Left ventricle myocardium inferior (tissue), 1 donor: ENCODE measurements at regions of chr1 and their contacts with region 1.

Region 1: GRCh38 chr1:182962554-182963115 is 9.7 kb upstream of the SHCBP1L start:
- DNase-seq: peak; percentile 81
- H3K4me3 ChIP-seq: peak overlapping the region; percentile 45
- H3K27ac ChIP-seq: peak overlapping the region; percentile 70
- H3K4me1 ChIP-seq: peaks cover 6% of the 10 kb centered on the region
- H3K27me3 ChIP-seq: no peaks in the 10 kb centered on the region
- CTCF ChIP-seq: peak; percentile 98

Region 2: GRCh38 chr1:182649041-182649440 is 313.6 kb before region 1 on chr1:
- intact Hi-C with region 1: no loop called
- DNase-seq: no peak
- H3K4me3 ChIP-seq: no peak overlapping the region
- H3K27ac ChIP-seq: no peak overlapping the region
- H3K4me1 ChIP-seq: no peaks in the 10 kb centered on the region
- H3K27me3 ChIP-seq: no peaks in the 10 kb centered on the region
- CTCF ChIP-seq: no peak

Region 3: DNA sequence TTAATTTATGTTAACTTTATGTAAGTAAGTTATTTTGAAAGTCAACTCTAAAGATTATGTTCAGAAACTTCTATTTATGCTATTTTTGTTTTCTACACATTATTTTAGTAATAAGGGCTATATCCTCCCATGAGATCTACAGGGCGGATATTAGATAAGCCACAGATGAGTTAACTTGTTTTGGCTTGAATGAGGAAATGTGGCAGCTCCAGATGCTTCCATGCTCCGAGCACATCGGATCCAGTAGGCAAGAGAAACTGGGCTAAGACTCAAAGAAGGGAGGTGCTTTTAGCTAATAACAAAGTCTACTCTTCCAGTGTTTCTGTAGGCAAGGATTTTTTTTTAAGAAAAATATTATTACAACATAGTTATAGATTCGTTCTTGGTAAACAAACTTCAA is 40.6 kb after region 1 on chr1:
- intact Hi-C with region 1: no loop called
- DNase-seq: no peak
- H3K4me3 ChIP-seq: peak overlapping the region; percentile 1
- H3K27ac ChIP-seq: peak overlapping the region; percentile 74
- H3K4me1 ChIP-seq: peaks cover 17% of the 10 kb centered on the region
- H3K27me3 ChIP-seq: no peaks in the 10 kb centered on the region
- CTCF ChIP-seq: no peak

Region 4: GRCh38 chr1:183023601-183024316 is 61.1 kb after region 1 on chr1:
- intact Hi-C with region 1: loop called (anchors 5 kb)
- DNase-seq: peak; percentile 65
- H3K4me3 ChIP-seq: peak overlapping the region; percentile 73
- H3K27ac ChIP-seq: peak overlapping the region; percentile 98
- H3K4me1 ChIP-seq: peaks cover 79% of the 10 kb centered on the region
- H3K27me3 ChIP-seq: no peaks in the 10 kb centered on the region
- CTCF ChIP-seq: peak; percentile 65

Region 5: DNA sequence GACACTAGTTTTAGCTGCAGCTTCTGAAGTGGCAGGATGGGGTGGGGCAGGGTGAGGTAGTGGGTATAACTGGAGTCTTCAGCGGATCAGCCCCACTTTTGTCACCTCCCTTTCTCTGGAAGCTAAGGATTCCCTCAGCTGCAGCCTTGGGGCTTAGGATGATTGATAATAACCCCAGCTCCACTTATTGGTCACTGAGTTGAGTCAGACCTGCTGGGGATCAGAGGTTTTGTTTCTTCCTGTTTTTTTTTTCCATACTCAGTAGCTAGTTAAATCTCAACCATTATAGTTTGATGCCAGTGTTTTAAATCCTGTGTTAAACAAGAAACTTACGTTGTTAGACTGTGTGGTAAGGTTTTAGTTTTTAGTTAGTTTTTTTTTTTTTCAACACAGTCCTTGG is 117.8 kb after region 1 on chr1:
- intact Hi-C with region 1: no loop called
- DNase-seq: no peak
- H3K4me3 ChIP-seq: no peak overlapping the region
- H3K27ac ChIP-seq: no peak overlapping the region
- H3K4me1 ChIP-seq: peaks cover 86% of the 10 kb centered on the region
- H3K27me3 ChIP-seq: no peaks in the 10 kb centered on the region
- CTCF ChIP-seq: no peak

Region 6: DNA sequence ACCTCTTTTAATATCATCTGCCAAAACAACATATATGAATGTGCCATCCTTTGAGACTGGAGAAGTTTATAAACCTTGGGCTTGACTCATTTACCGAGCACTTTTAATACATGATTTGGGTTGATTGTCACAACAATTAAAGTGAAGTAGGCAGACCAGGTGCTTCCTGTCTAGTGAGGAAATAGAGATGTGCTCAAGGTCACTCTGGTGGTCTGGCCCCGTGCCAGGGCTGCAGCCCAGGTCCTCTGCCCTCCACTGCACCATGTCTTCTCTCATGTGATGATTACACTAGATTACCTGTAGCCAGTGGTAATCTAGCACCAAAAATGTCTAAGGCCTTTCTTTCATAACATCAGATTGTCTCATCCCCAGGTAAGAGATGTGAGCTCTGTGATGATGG is 161.6 kb after region 1 on chr1:
- intact Hi-C with region 1: loop called (anchors 10 kb)
- DNase-seq: no peak
- H3K4me3 ChIP-seq: no peak overlapping the region
- H3K27ac ChIP-seq: peak overlapping the region; percentile 31
- H3K4me1 ChIP-seq: peaks cover 35% of the 10 kb centered on the region
- H3K27me3 ChIP-seq: no peaks in the 10 kb centered on the region
- CTCF ChIP-seq: no peak

Region 7: DNA sequence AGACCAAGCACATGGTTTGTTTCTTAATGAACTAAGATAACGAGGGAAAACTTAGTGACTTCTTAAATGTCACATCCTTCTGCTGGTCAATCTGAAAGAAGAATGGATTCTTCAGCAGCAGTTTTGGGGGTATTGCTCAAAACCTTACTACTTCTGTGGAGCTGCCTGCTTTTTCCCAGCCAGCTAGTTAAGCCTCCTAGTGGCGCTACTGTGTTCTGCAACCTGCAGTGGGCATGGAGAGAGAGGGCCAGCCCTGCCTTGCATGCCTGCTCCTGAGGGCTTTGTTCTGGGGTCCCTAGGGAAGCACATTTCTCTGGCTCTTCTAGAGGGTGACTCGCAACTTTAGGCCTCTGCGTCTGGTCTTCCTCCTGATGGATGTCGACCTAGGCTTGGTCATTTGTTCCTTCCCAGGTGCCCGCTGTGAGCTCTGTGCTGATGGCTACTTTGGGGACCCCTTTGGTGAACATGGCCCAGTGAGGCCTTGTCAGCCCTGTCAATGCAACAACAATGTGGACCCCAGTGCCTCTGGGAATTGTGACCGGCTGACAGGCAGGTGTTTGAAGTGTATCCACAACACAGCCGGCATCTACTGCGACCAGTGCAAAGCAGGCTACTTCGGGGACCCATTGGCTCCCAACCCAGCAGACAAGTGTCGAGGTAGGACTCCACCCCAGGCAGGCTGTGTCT is 265.5 kb after region 1 on chr1:
- intact Hi-C with region 1: loop called (anchors 2 kb)
- DNase-seq: peak; percentile 36
- H3K4me3 ChIP-seq: no peak overlapping the region
- H3K27ac ChIP-seq: no peak overlapping the region
- H3K4me1 ChIP-seq: peaks cover 4% of the 10 kb centered on the region
- H3K27me3 ChIP-seq: no peaks in the 10 kb centered on the region
- CTCF ChIP-seq: peak; percentile 89